SK-N-SH (cell line): ENCODE measurements at regions of chr17 and their contacts with region 1.

Region 1: GRCh38 chr17:67018471-67019437 is 25.6 kb upstream of the CACNG1 start:
- DNase-seq: peak; percentile 75
- H3K4me3 ChIP-seq: no peak overlapping the region
- H3K27ac ChIP-seq: peak overlapping the region in 1 of 2 experiments; percentile 99; a peak in 2 of 4 replicates
- H3K4me1 ChIP-seq: peaks cover 0 to 83% of the 10 kb centered on the region in 2 experiments; a peak in 2 of 4 replicates
- H3K27me3 ChIP-seq: no peaks in the 10 kb centered on the region
- CTCF ChIP-seq: no peak
- EP300 ChIP-seq: peak in 1 of 2 experiments; percentile 86; a peak in 2 of 4 replicates
- RAD21 ChIP-seq: peak; percentile 21; the same call in 1 of the 2 replicates

Region 2: GRCh38 chr17:66868459-66868858 is 150.3 kb before region 1 on chr17:
- CTCF ChIA-PET with region 1: no interaction called
- POLR2A ChIA-PET with region 1: no interaction called
- DNase-seq: no peak
- H3K4me3 ChIP-seq: no peak overlapping the region
- H3K27ac ChIP-seq: no peak overlapping the region
- H3K4me1 ChIP-seq: no peaks in the 10 kb centered on the region
- H3K27me3 ChIP-seq: peaks cover 7% of the 10 kb centered on the region; the same call in 1 of the 2 replicates
- CTCF ChIP-seq: no peak
- EP300 ChIP-seq: no peak
- RAD21 ChIP-seq: no peak

Region 3: DNA sequence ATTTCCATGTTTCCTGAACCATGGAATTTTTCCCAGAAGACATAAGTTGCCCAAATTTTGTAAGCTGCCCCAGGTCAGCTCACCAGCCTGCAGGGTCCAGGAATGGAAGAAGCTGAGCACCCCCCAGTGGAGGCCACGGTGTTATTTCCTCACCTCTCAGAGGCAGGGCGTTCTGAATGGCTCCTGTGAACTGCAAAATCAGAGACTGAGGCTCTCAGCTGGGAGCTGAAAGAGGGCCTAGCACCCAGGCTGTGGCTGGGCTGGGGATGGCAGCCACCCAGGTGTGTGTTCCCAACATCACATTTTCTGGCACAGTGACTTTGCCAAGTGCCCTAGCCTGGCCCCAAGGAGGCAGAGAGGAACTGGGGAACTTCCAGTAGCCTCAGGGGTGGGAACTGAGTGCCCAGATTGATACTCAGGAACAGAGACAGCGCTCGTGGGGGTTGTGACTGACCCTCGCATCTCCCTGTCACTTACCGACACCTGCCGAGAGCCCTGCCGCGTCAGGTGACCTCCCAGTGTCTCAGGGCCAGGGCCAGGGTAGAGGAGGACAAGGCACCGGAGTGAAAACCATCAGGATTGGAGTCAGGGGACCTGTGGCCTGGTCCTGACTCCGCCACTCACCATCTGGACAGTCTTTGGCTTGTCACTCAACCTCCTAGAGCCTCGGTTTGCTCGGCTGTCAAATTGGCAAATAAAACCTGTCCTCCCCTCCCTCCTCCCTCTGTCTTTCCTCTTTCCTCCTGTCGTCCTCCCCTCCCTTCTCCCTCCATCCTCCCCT is 43.0 kb before region 1 on chr17:
- CTCF ChIA-PET with region 1: interaction called, 25 read pairs
- POLR2A ChIA-PET with region 1: interaction called, 125 read pairs
- DNase-seq: no peak
- H3K4me3 ChIP-seq: no peak overlapping the region
- H3K27ac ChIP-seq: peak overlapping the region in 1 of 2 experiments; percentile 95; a peak in 2 of 4 replicates
- H3K4me1 ChIP-seq: peaks cover 5 to 80% of the 10 kb centered on the region in 2 experiments; a peak in 3 of 4 replicates
- H3K27me3 ChIP-seq: no peaks in the 10 kb centered on the region
- CTCF ChIP-seq: peak; percentile 51
- EP300 ChIP-seq: 0 out of 4 replicates have a peak, but pooled peaks of 1 of the 2 experiments have one; percentile 1
- RAD21 ChIP-seq: peak; percentile 65

Region 4: GRCh38 chr17:66985338-66986237 is 33.2 kb before region 1 on chr17:
- CTCF ChIA-PET with region 1: interaction called, 3 read pairs
- POLR2A ChIA-PET with region 1: interaction called, 20 read pairs
- DNase-seq: no peak
- H3K4me3 ChIP-seq: no peak overlapping the region
- H3K27ac ChIP-seq: peak overlapping the region in 1 of 2 experiments; percentile 98; a peak in 2 of 4 replicates
- H3K4me1 ChIP-seq: peaks cover 0 to 71% of the 10 kb centered on the region in 2 experiments; a peak in 2 of 4 replicates
- H3K27me3 ChIP-seq: no peaks in the 10 kb centered on the region
- CTCF ChIP-seq: no peak
- EP300 ChIP-seq: no peak; a peak in 1 of 4 replicates
- RAD21 ChIP-seq: no peak

Region 5: GRCh38 chr17:66995944-66996343 is 22.8 kb before region 1 on chr17:
- CTCF ChIA-PET with region 1: interaction called, 4 read pairs
- POLR2A ChIA-PET with region 1: interaction called, 10 read pairs
- DNase-seq: no peak
- H3K4me3 ChIP-seq: no peak overlapping the region
- H3K27ac ChIP-seq: peak overlapping the region in 1 of 2 experiments; percentile 36; a peak in 1 of 4 replicates
- H3K4me1 ChIP-seq: peaks cover 0 to 35% of the 10 kb centered on the region in 2 experiments; a peak in 2 of 4 replicates
- H3K27me3 ChIP-seq: no peaks in the 10 kb centered on the region
- CTCF ChIP-seq: no peak
- EP300 ChIP-seq: peak in 1 of 2 experiments; percentile 10; a peak in 1 of 4 replicates
- RAD21 ChIP-seq: no peak

Region 6: DNA sequence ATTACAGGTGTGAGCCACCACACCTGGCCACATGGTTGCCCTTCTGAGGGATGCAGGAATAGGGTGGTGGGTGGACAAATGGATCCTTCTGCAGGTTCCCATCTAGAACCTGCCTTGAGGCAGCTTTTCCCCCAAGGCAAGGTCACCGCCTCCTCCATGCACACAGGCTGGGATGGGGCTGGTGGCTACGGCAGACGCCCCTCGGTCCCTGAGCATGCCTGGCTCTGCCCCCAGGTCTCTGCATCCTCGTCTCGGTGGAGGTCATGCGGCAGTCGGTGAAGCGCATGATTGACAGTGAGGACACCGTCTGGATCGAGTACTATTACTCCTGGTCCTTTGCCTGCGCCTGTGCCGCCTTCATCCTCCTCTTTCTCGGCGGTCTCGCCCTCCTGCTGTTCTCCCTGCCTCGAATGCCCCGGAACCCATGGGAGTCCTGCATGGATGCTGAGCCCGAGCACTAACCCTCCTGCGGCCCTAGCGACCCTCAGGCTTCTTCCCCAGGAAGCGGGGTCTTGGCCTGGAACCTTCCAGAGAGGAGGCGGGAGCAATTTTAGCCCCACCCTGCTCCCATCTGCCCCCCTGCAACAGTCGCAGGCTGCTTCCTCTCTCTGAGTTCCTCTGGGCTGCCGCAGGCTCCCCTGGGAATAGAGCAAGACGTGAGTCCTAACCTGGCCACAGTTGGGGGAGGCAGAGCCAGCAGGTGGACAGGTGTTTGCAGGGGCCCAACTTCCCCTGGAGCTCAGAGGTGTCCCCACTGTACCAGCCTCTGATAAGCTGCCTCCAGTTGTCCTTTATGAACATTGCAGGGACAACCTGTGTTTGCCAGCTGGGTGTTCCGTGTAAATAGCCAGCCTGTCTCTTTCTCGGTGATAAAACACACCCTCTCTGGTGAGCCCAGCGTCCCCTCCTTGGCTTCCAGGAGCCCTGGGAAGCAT is 37.3 kb after region 1 on chr17:
- CTCF ChIA-PET with region 1: no interaction called
- POLR2A ChIA-PET with region 1: no interaction called
- DNase-seq: peak; percentile 40
- H3K4me3 ChIP-seq: no peak overlapping the region
- H3K27ac ChIP-seq: no peak overlapping the region
- H3K4me1 ChIP-seq: peaks cover 0 to under 1% of the 10 kb centered on the region in 2 experiments; a peak in 1 of 4 replicates
- H3K27me3 ChIP-seq: no peaks in the 10 kb centered on the region
- CTCF ChIP-seq: no peak
- EP300 ChIP-seq: no peak
- RAD21 ChIP-seq: no peak

Region 7: DNA sequence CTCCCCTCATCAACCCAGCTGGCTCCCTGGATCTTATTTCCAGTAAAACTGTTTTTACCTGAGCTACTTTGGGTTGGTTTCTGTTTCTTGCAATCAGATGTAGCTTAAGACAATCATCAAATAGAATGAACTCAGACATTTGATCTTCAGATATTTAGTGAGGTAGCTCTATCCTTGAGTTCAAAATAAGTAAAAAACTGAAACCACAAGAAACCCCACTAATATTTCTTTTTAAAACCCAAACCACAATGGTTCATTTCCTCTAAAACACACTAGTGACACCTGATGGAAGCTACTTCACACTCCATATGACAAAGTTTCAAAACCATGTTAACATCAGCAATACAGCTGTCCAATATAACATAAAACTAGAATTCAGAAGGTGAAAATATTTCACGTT is 63.4 kb after region 1 on chr17:
- CTCF ChIA-PET with region 1: interaction called, 18 read pairs
- POLR2A ChIA-PET with region 1: no interaction called
- DNase-seq: no peak
- H3K4me3 ChIP-seq: no peak overlapping the region
- H3K27ac ChIP-seq: peak overlapping the region in 1 of 2 experiments; percentile 36; a peak in 1 of 4 replicates
- H3K4me1 ChIP-seq: peaks cover 0 to 10% of the 10 kb centered on the region in 2 experiments; a peak in 2 of 4 replicates
- H3K27me3 ChIP-seq: no peaks in the 10 kb centered on the region
- CTCF ChIP-seq: no peak
- EP300 ChIP-seq: no peak
- RAD21 ChIP-seq: peak; percentile 68

Region 8: DNA sequence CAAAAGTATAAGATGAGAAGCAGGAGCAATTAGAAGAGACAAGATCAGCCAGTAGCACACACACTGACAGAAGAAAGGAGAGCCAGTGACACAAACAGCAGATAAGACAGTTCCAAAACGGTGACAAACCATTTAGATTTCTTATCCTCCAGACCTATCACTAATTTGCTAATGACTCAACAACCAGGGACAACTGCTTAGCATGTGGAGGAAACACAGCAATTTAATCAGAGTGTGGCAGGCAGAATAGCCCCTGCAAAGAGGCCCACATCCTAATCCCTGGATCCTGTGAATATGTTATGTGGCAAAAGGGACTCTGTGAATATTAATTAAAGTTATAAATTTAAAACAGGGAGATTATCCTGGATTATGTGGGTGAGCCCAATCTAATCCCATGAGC is 106.7 kb after region 1 on chr17:
- CTCF ChIA-PET with region 1: interaction called, 6 read pairs
- POLR2A ChIA-PET with region 1: interaction called, 14 read pairs
- DNase-seq: peak; percentile 71
- H3K4me3 ChIP-seq: no peak overlapping the region
- H3K27ac ChIP-seq: peak overlapping the region; percentile 29 to 99; a peak in 3 of 4 replicates
- H3K4me1 ChIP-seq: peaks cover 4 to 47% of the 10 kb centered on the region in 2 experiments; a peak in 3 of 4 replicates
- H3K27me3 ChIP-seq: no peaks in the 10 kb centered on the region
- CTCF ChIP-seq: no peak
- EP300 ChIP-seq: peak; percentile 34 to 100; a peak in 3 of 4 replicates
- RAD21 ChIP-seq: peak; percentile 52